ENCODE measurements at regions of chr7 and their contacts with region 1.

Region 1: GRCh38 chr7:2354186-2354938 is at the start of gene EIF3B:
- DNase-seq: peak; percentile 98
- H3K4me3 ChIP-seq: peak within 1 kb of the TSS; percentile 90 to 100 (median 96)
- H3K27ac ChIP-seq: peak within 1 kb of the TSS; percentile 93 to 98 (median 97)
- H3K4me1 ChIP-seq: peaks cover 32 to 52% (median 52%) of the 10 kb centered on the region in 4 donors
- H3K27me3 ChIP-seq: no peaks in the 10 kb centered on the region
- CTCF ChIP-seq: no peak
- EP300 ChIP-seq: no peak
- POLR2A ChIP-seq: peak; percentile 14
- total RNA-seq, gene EIF3B: 105 to 155 (median 128) TPM

Region 2: GRCh38 chr7:1569833-1570633 is 784.3 kb before region 1 on chr7 and contains the start of gene PSMG3:
- intact Hi-C with region 1: loop called (anchors 5 kb)
- DNase-seq: peak; percentile 97
- H3K4me3 ChIP-seq: peak within 1 kb of the TSS; percentile 82 to 94 (median 83)
- H3K27ac ChIP-seq: peak within 1 kb of the TSS; percentile 92 to 99 (median 94)
- H3K4me1 ChIP-seq: peaks cover 21 to 41% (median 34%) of the 10 kb centered on the region in 4 donors
- H3K27me3 ChIP-seq: no peaks in the 10 kb centered on the region
- CTCF ChIP-seq: peak in 2 of 3 experiments; percentile 39 to 50
- EP300 ChIP-seq: no peak
- POLR2A ChIP-seq: peak; percentile 39
- total RNA-seq, gene PSMG3: 26.8 to 33.2 (median 29.3) TPM

Region 3: DNA sequence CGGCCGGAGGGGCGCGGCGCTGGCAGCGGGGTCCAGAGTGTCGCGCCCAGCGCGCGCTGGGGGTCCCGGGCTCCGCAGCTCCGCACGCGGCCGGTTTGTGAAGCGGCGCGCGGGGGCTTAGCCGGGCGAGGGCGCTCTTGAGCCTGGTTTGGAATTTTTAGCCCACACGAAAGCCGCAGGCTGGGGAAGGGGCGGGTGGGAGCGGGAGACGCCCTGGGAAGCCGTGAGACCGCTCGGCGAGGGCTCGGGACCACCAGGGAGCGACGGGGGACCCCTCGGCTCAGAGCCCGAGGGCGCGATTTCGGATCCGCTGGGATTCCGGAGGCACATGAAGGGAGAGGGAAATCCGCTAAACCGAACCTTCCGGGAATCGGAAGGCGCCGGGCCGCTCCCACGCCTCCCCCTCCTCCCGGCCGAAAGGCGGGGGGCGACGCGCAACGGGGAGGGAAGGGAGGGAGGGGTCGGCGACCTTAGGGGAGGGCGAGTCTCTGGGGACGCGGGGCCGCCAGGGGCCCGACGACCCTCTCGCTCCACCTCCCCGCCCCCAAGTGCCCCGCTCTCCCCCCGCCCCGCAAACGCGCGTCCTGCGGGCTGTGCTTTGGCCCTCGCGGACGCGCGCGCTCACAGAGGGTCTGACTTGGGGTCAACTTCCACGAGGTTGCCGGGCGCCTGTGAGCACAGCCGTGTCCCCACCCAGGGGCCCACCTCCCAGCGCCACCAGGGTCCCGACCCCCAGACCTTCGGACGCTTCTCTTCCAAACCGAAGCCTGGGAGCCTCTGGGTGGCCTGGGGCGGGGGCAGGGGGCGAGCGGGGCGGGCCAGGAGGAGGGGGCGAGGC is 689.4 kb before region 1 on chr7:
- intact Hi-C with region 1: loop called (anchors 10 kb)
- DNase-seq: no peak
- H3K4me3 ChIP-seq: peak overlapping the region; percentile 52 to 70 (median 62)
- H3K27ac ChIP-seq: peak overlapping the region; percentile 33 to 54 (median 38)
- H3K4me1 ChIP-seq: peaks cover 41 to 54% (median 51%) of the 10 kb centered on the region in 4 donors
- H3K27me3 ChIP-seq: peaks cover 6 to 92% (median 58%) of the 10 kb centered on the region in 4 donors
- CTCF ChIP-seq: peak; percentile 68 to 89 (median 77)
- EP300 ChIP-seq: no peak
- POLR2A ChIP-seq: no peak

Region 4: GRCh38 chr7:2248984-2249694 is 105.2 kb before region 1 on chr7:
- intact Hi-C with region 1: loop called (anchors 5 kb)
- DNase-seq: no peak
- H3K4me3 ChIP-seq: no peak overlapping the region
- H3K27ac ChIP-seq: peak overlapping the region in 2 of 4 donors; percentile 34 to 62
- H3K4me1 ChIP-seq: peaks cover 6 to 15% (median 11%) of the 10 kb centered on the region in 4 donors
- H3K27me3 ChIP-seq: no peaks in the 10 kb centered on the region
- CTCF ChIP-seq: no peak
- EP300 ChIP-seq: no peak
- POLR2A ChIP-seq: no peak

Region 5: DNA sequence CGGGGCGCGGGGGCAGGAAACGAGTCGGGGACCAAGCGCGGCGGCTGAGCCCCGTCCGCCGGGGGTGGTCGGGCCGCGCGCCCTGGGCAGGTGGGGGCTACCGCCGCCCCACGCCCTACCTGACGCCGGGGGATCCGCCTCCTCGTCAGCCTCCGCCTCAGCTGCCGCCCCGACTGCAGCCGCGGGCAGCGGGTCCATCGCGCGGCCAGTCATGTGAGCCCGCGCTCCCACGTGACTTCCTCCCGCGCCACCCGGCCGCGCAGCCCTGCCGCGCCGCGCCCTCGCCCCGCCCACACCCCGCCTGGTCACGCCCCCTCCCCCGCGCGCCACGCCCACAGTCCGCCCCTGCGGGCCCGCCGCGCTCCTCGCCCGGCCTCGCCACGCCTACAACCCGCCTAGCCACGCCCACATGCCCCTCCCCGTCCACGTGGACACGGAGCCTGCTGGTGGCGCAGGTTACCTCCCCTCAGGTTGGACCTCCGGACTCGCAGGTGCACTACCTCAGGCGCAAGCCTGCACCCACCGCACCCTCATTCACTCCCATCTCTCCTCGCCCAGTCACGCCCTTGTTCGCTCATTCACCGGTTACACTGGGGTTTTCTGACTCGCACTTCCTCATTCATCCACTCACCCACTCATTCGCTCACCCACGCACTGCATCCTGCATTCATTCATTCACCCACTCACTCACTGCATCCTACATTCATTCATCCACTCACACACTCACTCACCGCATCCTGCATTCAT is 40.0 kb before region 1 on chr7 and contains the start of gene SNX8:
- intact Hi-C with region 1: loop called (anchors 5 kb)
- DNase-seq: peak; percentile 97
- H3K4me3 ChIP-seq: peak within 1 kb of the TSS; percentile 77 to 98 (median 80)
- H3K27ac ChIP-seq: peak within 1 kb of the TSS; percentile 74 to 84 (median 75)
- H3K4me1 ChIP-seq: peaks cover 0 to 24% (median 19%) of the 10 kb centered on the region in 4 donors
- H3K27me3 ChIP-seq: peaks cover 0 to 4% (median 0%) of the 10 kb centered on the region in 4 donors
- CTCF ChIP-seq: peak in 1 of 3 experiments; percentile 28
- EP300 ChIP-seq: no peak
- POLR2A ChIP-seq: no peak
- total RNA-seq, gene SNX8: 6.8 to 9.9 (median 8.7) TPM

Region 6: GRCh38 chr7:2403014-2403717 is 48.8 kb after region 1 on chr7 and contains the start of gene CHST12:
- intact Hi-C with region 1: loop called (anchors 1 kb)
- DNase-seq: peak; percentile 98
- H3K4me3 ChIP-seq: peak within 1 kb of the TSS; percentile 85 to 99 (median 97)
- H3K27ac ChIP-seq: peak within 1 kb of the TSS; percentile 81 to 86 (median 84)
- H3K4me1 ChIP-seq: peaks cover 46 to 65% (median 59%) of the 10 kb centered on the region in 4 donors
- H3K27me3 ChIP-seq: no peaks in the 10 kb centered on the region
- CTCF ChIP-seq: no peak
- EP300 ChIP-seq: no peak
- POLR2A ChIP-seq: no peak
- total RNA-seq, gene CHST12: 6.6 to 24.0 (median 14.8) TPM

Region 7: GRCh38 chr7:2497500-2498336 is 143.4 kb after region 1 on chr7:
- intact Hi-C with region 1: no loop called
- DNase-seq: no peak
- H3K4me3 ChIP-seq: no peak overlapping the region
- H3K27ac ChIP-seq: no peak overlapping the region
- H3K4me1 ChIP-seq: peaks cover 16 to 27% (median 23%) of the 10 kb centered on the region in 4 donors
- H3K27me3 ChIP-seq: peaks cover 0 to 82% (median 4%) of the 10 kb centered on the region in 4 donors
- CTCF ChIP-seq: no peak
- EP300 ChIP-seq: no peak
- POLR2A ChIP-seq: no peak